GM12878 (cell line): ENCODE measurements at regions of chr1 and their contacts with region 1.

Region 1: DNA sequence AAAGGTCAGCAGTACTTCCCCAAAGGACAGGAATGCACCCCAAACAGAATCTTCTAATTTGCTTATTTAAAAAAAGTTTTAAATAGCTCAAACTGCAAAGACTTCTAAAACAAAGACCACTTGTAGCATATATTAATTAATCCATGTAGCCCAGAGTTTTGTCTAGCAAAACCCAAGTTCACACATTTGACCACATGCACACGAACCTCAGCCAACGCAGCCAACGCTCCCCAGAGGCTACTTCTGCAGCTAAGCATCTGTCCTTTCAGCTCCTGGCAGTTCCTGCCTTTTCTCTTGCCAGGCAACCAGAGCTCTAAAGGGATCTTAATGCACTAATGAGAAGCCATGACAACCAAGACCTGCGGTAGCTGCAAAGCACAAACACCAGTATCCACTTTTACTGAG is 89.6 kb downstream of the RERE start:
- DNase-seq: no peak
- ATAC-seq: peak; percentile 73
- H3K4me3 ChIP-seq: no peak overlapping the region
- H3K27ac ChIP-seq: no peak overlapping the region
- H3K4me1 ChIP-seq: peaks cover 25% of the 10 kb centered on the region
- H3K27me3 ChIP-seq: no peaks in the 10 kb centered on the region
- CTCF ChIP-seq: no peak
- EP300 ChIP-seq: no peak
- POLR2A ChIP-seq: no peak
- RAD21 ChIP-seq: no peak

Region 2: DNA sequence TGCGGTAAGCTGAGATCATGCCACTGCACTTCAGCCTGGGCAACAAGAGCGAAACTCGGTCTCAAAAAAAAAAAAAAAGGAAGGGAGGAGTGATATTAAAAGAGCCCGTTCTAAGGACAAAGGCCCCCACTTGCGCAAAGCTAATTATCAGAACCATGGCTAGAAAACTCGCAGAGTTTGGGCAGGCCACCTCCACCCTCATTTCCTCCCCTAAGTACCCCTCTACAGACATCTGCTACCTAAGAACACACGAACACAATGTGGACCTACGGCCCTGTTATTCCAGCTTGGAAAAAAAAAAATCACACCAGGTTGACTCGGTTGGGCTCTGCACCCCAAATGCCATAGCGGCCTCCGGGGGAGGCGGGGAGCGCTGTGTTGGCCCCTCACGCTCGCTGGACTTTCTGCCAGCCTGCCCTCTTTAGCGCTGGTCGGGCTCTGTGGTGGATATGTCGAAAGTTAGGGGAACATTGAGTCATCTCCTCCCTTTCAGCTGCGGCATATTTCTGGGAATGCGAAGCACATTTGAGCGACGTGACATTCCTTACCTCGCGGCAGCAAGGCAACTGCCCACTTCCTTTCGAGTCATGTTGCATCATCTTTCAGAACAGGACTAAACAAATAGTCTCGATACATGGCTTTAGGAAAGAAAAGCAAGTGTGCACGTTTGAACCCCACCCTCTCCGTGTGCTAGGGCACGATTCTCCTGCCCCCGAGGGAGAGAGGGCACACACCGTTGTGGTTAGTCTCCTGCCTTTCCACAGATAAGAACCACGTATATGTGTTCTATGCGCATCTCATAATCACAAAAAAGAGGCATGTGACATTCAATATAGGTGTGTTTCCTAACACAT is 516.0 kb before region 1 on chr1:
- CTCF ChIA-PET with region 1: no interaction called
- POLR2A ChIA-PET with region 1: no interaction called
- RAD21 ChIA-PET with region 1: no interaction called
- SMC1A ChIA-PET with region 1: no interaction called
- in situ Hi-C with region 1: no loop called
- intact Hi-C with region 1: no loop called
- DNase-seq: no peak
- ATAC-seq: no peak
- H3K4me3 ChIP-seq: no peak overlapping the region
- H3K27ac ChIP-seq: no peak overlapping the region
- H3K4me1 ChIP-seq: no peaks in the 10 kb centered on the region
- H3K27me3 ChIP-seq: no peaks in the 10 kb centered on the region; a peak in 1 of 4 replicates
- CTCF ChIP-seq: no peak
- EP300 ChIP-seq: no peak
- POLR2A ChIP-seq: no peak
- RAD21 ChIP-seq: no peak

Region 3: GRCh38 chr1:8396786-8397406 is 330.9 kb before region 1 on chr1:
- CTCF ChIA-PET with region 1: no interaction called
- POLR2A ChIA-PET with region 1: no interaction called
- RAD21 ChIA-PET with region 1: no interaction called
- SMC1A ChIA-PET with region 1: no interaction called
- in situ Hi-C with region 1: no loop called
- intact Hi-C with region 1: loop called (anchors 10 kb)
- DNase-seq: peak; percentile 49
- ATAC-seq: peak; percentile 77
- H3K4me3 ChIP-seq: peak overlapping the region; percentile 7; the same call in 1 of the 2 replicates
- H3K27ac ChIP-seq: peak overlapping the region; percentile 87
- H3K4me1 ChIP-seq: peaks cover 48% of the 10 kb centered on the region
- H3K27me3 ChIP-seq: no peaks in the 10 kb centered on the region
- CTCF ChIP-seq: no peak
- EP300 ChIP-seq: no peak
- POLR2A ChIP-seq: no peak
- RAD21 ChIP-seq: no peak

Region 4: GRCh38 chr1:8604041-8604945 is 123.5 kb before region 1 on chr1:
- CTCF ChIA-PET with region 1: interaction called, 11 read pairs
- POLR2A ChIA-PET with region 1: no interaction called
- RAD21 ChIA-PET with region 1: interaction called, 3 read pairs
- SMC1A ChIA-PET with region 1: interaction called, 3 read pairs
- in situ Hi-C with region 1: no loop called
- intact Hi-C with region 1: no loop called
- DNase-seq: peak; percentile 82
- ATAC-seq: peak; percentile 95
- H3K4me3 ChIP-seq: peak overlapping the region; percentile 46; the same call in 1 of the 2 replicates
- H3K27ac ChIP-seq: peak overlapping the region; percentile 29; the same call in 1 of the 2 replicates
- H3K4me1 ChIP-seq: peaks cover 19% of the 10 kb centered on the region
- H3K27me3 ChIP-seq: no peaks in the 10 kb centered on the region
- CTCF ChIP-seq: no peak
- EP300 ChIP-seq: peak in 1 of 2 experiments; percentile 58; a peak in 1 of 4 replicates
- POLR2A ChIP-seq: no peak
- RAD21 ChIP-seq: 0 out of 2 replicates have a peak, but pooled peaks have one; percentile 12

Region 5: DNA sequence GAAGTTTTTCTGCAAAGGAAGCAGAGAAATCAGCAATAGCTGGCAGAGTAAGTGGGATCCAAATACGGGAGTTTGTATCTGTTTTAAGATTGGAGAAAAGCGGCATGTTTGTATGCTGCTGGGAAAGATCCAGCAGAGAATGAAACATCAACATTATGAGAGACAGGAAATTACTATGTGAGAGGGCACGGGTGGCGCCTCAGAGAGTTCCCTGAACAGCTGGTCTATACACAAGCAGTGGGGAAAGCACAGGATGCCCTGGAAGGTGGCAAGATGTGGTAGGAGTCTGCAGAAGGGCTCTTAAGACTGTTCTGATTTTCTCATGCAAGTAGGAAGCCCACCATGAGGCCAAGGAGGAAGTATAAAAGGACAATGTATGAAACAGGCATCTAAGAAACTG is 40.8 kb before region 1 on chr1:
- CTCF ChIA-PET with region 1: interaction called, 9 read pairs
- POLR2A ChIA-PET with region 1: interaction called, 3 read pairs
- RAD21 ChIA-PET with region 1: interaction called, 8 read pairs
- SMC1A ChIA-PET with region 1: interaction called, 10 read pairs
- in situ Hi-C with region 1: no loop called
- intact Hi-C with region 1: no loop called
- DNase-seq: no peak
- ATAC-seq: peak; percentile 72
- H3K4me3 ChIP-seq: no peak overlapping the region
- H3K27ac ChIP-seq: peak overlapping the region; percentile 5; the same call in 1 of the 2 replicates
- H3K4me1 ChIP-seq: peaks cover 23% of the 10 kb centered on the region
- H3K27me3 ChIP-seq: no peaks in the 10 kb centered on the region
- CTCF ChIP-seq: no peak
- EP300 ChIP-seq: no peak
- POLR2A ChIP-seq: no peak
- RAD21 ChIP-seq: no peak

Region 6: GRCh38 chr1:8712413-8713231 is 15.2 kb before region 1 on chr1:
- CTCF ChIA-PET with region 1: interaction called, 50 read pairs
- POLR2A ChIA-PET with region 1: interaction called, 7 read pairs
- RAD21 ChIA-PET with region 1: interaction called, 6 read pairs
- SMC1A ChIA-PET with region 1: interaction called, 23 read pairs
- in situ Hi-C with region 1: no loop called
- intact Hi-C with region 1: no loop called
- DNase-seq: no peak
- ATAC-seq: peak; percentile 83
- H3K4me3 ChIP-seq: peak overlapping the region; percentile 10; the same call in 1 of the 2 replicates
- H3K27ac ChIP-seq: peak overlapping the region; percentile 49
- H3K4me1 ChIP-seq: peaks cover 8% of the 10 kb centered on the region
- H3K27me3 ChIP-seq: no peaks in the 10 kb centered on the region
- CTCF ChIP-seq: no peak
- EP300 ChIP-seq: peak in 1 of 2 experiments; percentile 55; a peak in 1 of 4 replicates
- POLR2A ChIP-seq: no peak
- RAD21 ChIP-seq: no peak

Region 7: GRCh38 chr1:8747879-8748825 is 20.3 kb after region 1 on chr1:
- CTCF ChIA-PET with region 1: interaction called, 11 read pairs
- POLR2A ChIA-PET with region 1: interaction called, 4 read pairs
- RAD21 ChIA-PET with region 1: no interaction called
- SMC1A ChIA-PET with region 1: interaction called, 5 read pairs
- in situ Hi-C with region 1: no loop called
- intact Hi-C with region 1: no loop called
- DNase-seq: no peak
- ATAC-seq: no peak
- H3K4me3 ChIP-seq: no peak overlapping the region
- H3K27ac ChIP-seq: no peak overlapping the region
- H3K4me1 ChIP-seq: peaks cover 6% of the 10 kb centered on the region
- H3K27me3 ChIP-seq: no peaks in the 10 kb centered on the region
- CTCF ChIP-seq: no peak
- EP300 ChIP-seq: no peak
- POLR2A ChIP-seq: no peak
- RAD21 ChIP-seq: no peak

Region 8: DNA sequence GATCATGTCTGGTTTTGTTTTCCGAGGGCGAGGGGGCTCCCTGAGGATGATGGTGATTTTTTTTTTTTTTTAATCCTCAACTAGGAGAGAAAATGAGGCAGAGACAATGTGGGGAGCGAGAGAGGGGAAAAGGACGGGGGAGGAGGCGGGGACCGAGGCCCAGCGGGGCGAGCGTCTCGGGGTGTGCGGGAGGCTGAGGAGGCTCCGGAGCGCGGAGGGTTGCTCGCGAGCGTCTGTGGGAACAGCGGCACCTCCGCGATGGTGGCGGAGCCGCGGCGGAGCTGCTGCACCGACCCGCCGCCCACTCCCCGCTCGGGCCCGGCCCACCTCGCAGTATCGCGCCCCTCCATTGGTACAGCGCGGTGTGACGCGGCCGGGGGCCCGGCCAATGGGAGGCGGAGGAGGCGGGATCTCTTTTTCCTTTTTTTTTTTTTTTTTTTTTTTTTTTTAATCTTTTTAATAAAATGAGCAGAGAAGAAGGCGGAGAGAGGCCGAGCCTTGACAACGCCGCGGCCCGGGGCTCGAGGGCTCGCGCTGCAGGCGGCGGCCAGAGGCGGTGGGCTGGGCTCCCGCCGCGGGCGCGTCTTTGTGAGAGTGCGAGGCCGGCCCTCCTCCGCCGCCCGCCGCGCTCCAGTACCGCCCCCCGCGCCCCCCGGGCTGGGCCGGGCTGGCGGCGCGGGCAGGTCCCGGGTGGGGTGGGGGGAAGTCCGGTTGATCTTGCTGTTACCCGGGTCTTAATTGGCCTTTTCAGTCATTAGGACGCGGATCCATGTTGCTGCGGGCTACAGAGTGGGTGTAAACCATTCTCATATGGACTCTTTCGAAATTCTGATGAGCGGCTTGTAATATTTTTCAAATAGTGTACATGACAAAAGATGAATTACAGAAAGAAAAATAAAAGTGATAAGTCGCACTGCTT is 89.9 kb after region 1 on chr1 and contains the start of gene RERE:
- CTCF ChIA-PET with region 1: interaction called, 20 read pairs
- POLR2A ChIA-PET with region 1: interaction called, 3 read pairs
- RAD21 ChIA-PET with region 1: interaction called, 10 read pairs
- SMC1A ChIA-PET with region 1: interaction called, 22 read pairs
- in situ Hi-C with region 1: no loop called
- intact Hi-C with region 1: no loop called
- DNase-seq: peak; percentile 74
- ATAC-seq: peak; percentile 92
- H3K4me3 ChIP-seq: peak within 1 kb of the TSS; percentile 91
- H3K27ac ChIP-seq: peak within 1 kb of the TSS; percentile 95
- H3K4me1 ChIP-seq: no peaks in the 10 kb centered on the region
- H3K27me3 ChIP-seq: no peaks in the 10 kb centered on the region
- CTCF ChIP-seq: 0 out of 6 replicates have a peak, but pooled peaks of 1 of the 3 experiments have one; percentile 0
- EP300 ChIP-seq: no peak
- POLR2A ChIP-seq: peak; percentile 92
- RAD21 ChIP-seq: no peak
- polyA plus RNA-seq, gene RERE: 5.2 to 5.9 TPM

Region 9: DNA sequence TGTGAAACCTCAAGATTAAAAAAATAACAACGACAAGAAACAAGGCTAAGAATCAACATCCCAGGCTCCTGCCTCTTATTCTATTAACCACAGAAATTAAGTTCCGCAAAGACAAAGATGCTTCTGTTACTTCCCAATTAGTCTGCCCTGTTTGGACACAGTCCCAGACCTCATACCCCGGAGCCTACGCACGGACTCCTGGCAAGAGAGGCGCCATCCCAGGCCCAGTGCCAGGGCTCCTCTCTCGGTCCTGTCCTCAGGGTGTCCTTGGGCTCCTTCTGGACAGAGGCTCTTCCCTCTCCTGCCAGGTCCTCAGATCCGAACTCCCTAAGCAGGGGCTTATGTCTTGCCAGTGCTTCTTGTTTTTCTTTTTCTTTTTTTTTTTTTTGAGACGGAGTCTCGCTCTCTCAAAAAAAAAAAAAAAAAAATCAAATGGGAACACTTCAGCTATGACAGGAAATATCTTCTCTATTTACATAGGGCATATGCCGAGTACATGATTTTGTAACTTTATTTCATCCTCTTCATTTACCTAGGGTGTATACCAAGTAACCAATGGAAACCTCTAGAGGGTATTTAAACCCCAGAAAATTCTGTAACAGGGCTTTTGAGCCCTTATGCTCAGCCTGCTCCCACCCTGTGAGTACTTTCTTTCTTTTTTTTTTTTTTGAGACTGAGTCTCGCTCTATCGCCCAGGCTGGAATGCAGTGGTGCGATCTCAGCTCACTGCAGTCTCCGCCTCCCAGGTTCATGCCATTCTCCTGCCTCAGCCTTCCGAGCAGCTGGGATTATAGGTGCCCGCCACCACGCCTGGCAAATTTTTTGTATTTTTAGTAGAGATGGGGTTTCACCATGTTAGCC is 162.3 kb after region 1 on chr1:
- CTCF ChIA-PET with region 1: no interaction called
- POLR2A ChIA-PET with region 1: no interaction called
- RAD21 ChIA-PET with region 1: no interaction called
- SMC1A ChIA-PET with region 1: no interaction called
- in situ Hi-C with region 1: no loop called
- intact Hi-C with region 1: no loop called
- DNase-seq: no peak
- ATAC-seq: no peak
- H3K4me3 ChIP-seq: no peak overlapping the region
- H3K27ac ChIP-seq: no peak overlapping the region
- H3K4me1 ChIP-seq: no peaks in the 10 kb centered on the region
- H3K27me3 ChIP-seq: no peaks in the 10 kb centered on the region; a peak in 1 of 4 replicates
- CTCF ChIP-seq: no peak
- EP300 ChIP-seq: no peak
- POLR2A ChIP-seq: no peak
- RAD21 ChIP-seq: no peak

Region 10: DNA sequence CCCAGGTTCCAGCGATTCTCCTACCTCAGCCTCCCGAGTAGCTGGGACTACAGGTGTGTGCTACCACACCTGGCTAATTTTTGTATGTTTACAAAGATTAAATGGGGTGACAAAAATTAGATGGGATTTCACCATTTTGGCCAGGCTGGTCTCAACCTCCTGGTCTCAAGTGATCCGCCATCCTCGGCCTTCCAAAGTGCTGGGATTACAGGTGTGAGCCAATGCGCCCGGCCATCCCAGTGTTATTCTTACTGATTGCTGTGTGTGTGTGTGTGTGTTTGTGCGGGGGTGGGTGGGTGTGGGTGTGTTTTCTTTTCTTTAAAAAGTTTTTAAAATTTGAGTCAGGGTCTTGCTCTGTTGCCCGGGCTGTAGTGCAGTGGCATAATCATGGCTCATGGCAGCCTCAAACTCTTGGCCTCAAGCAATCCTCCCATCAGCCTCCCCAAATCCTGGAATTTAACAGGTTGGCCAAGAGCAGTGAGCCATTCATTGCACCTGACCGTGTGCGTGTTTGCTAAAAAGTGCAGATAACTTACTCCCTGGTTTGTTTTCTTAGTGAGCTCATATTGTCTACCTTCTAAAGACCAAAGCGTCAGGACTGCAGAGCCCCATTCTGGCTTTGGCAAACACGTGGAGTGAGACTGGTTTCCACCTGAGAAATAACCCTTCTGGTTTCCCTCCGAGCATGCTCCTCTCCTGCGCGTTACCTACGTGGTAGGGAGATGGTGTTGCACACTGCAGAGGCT is 185.5 kb after region 1 on chr1:
- CTCF ChIA-PET with region 1: no interaction called
- POLR2A ChIA-PET with region 1: no interaction called
- RAD21 ChIA-PET with region 1: no interaction called
- SMC1A ChIA-PET with region 1: no interaction called
- in situ Hi-C with region 1: no loop called
- intact Hi-C with region 1: no loop called
- DNase-seq: no peak
- ATAC-seq: no peak
- H3K4me3 ChIP-seq: no peak overlapping the region
- H3K27ac ChIP-seq: no peak overlapping the region
- H3K4me1 ChIP-seq: no peaks in the 10 kb centered on the region
- H3K27me3 ChIP-seq: peaks cover 0 to 3% of the 10 kb centered on the region in 2 experiments; a peak in 3 of 4 replicates
- CTCF ChIP-seq: no peak
- EP300 ChIP-seq: no peak
- POLR2A ChIP-seq: no peak
- RAD21 ChIP-seq: no peak